ENCODE measurements at regions of chr4 and their contacts with region 1.

Region 1: DNA sequence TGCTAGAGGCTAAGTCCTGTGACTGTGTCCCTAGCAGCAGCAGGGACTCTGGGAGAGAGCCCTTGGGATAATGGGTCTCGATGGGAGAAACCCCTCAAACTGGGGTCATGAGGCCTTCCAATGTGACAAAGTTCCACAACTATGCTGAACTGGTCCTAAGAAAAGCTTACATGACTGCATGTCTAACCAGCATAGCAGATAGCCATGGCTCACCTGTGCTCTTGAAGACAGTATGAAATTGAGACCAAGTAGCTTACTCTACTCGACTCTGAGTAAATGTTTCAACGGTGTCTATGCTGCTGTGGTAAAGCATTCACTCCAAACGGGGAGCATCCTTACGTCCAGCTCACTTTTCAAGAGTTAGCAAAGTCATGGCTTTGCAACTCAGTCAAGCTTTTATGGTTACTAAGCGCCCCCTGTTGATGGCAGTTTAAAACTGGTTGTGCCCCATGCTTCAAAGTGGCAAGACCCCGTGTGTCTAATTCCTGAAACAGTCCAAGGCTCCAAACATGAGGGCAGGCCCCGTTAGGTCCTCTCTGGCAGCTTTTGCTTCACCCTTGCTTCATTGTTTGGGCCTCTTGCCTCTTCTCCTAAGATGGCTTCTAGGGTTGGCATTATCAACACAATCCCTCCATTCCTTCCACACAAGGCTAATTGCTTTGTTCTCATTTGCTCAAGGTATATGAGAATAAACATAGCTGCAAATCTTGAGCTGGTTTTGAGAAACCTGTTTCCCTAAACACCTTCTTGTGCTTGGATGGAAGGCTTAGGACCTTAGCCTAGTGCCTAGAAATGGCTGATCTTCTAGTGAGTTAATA is 46.6 kb downstream of the CCNG2 start:
- DNase-seq: peak; percentile 61 to 82 (median 65)
- ATAC-seq: peak; percentile 95
- H3K4me3 ChIP-seq: no peak overlapping the region
- H3K27ac ChIP-seq: no peak overlapping the region
- H3K4me1 ChIP-seq: no peaks in the 10 kb centered on the region
- H3K27me3 ChIP-seq: peaks cover 16 to 21% of the 10 kb centered on the region in 2 experiments; a peak in 4 of 5 replicates
- CTCF ChIP-seq: peak; percentile 76 to 89 (median 84)
- EP300 ChIP-seq: no peak
- POLR2A ChIP-seq: no peak
- RAD21 ChIP-seq: peak; percentile 83 to 89

Region 2: DNA sequence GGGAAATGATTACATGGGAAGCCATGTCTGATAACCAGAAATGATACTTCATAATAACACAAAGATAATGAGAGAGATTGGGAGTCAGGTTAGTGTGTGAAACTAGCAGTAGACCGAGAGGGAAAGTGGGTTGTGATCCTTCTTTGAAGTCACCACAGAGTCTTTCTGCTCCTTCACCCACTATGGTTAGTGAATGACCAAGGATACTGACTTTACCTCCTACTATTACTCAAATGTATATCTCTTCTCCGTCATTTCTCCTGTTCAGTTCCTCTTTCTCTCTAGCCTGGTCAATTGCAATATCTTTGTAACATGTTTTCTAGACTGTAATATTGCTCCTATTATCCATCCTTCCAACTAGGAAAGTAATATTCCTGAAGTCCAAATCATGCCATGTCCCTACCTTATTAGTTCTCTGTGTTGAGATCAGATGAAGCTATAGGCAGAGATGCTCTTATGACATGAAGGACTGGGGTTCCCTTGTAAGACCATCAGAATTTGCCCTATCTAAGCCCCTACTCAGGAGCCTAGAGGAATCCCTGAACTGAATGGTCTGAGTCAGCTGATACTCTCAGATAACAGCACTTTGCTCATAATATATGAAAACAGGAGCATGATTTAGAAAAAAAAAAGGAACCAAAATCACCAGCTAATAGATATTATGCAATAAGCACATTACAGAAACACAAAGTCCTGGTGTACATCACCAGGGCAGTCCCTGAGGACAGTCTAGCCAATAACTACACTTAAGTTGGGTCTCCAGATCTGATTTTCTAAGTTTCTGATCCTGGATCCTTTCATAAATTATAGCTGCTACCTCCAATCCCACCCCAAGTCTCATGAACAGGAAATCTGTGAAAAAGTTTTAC is 687.4 kb before region 1 on chr4:
- CTCF ChIA-PET with region 1: interaction called, 3 read pairs
- POLR2A ChIA-PET with region 1: no interaction called
- in situ Hi-C with region 1: no loop called
- intact Hi-C with region 1: loop called (anchors 5 kb)
- DNase-seq: no peak
- ATAC-seq: no peak
- H3K4me3 ChIP-seq: no peak overlapping the region
- H3K27ac ChIP-seq: no peak overlapping the region
- H3K4me1 ChIP-seq: no peaks in the 10 kb centered on the region
- H3K27me3 ChIP-seq: 0 out of 5 replicates have a peak, but pooled peaks cover 0 to 4% of the 10 kb centered on the region in 2 experiments
- CTCF ChIP-seq: no peak
- EP300 ChIP-seq: no peak
- POLR2A ChIP-seq: no peak
- RAD21 ChIP-seq: no peak

Region 3: GRCh38 chr4:76589872-76590797 is 613.5 kb before region 1 on chr4:
- CTCF ChIA-PET with region 1: no interaction called
- POLR2A ChIA-PET with region 1: no interaction called
- in situ Hi-C with region 1: no loop called
- intact Hi-C with region 1: no loop called
- DNase-seq: no peak
- ATAC-seq: no peak
- H3K4me3 ChIP-seq: no peak overlapping the region
- H3K27ac ChIP-seq: no peak overlapping the region
- H3K4me1 ChIP-seq: peaks cover 0 to 6% of the 10 kb centered on the region in 2 experiments; a peak in 2 of 5 replicates
- H3K27me3 ChIP-seq: peaks cover 14 to 33% of the 10 kb centered on the region in 2 experiments; a peak in 4 of 5 replicates
- CTCF ChIP-seq: no peak
- EP300 ChIP-seq: no peak
- POLR2A ChIP-seq: no peak
- RAD21 ChIP-seq: no peak

Region 4: GRCh38 chr4:76949276-76950051 is 254.1 kb before region 1 on chr4 and contains the start of gene SEPTIN11:
- CTCF ChIA-PET with region 1: no interaction called
- POLR2A ChIA-PET with region 1: no interaction called
- in situ Hi-C with region 1: no loop called
- intact Hi-C with region 1: loop called (anchors 5 kb)
- DNase-seq: peak; percentile 90 to 95 (median 94)
- ATAC-seq: peak; percentile 84
- H3K4me3 ChIP-seq: peak within 1 kb of the TSS; percentile 80
- H3K27ac ChIP-seq: peak within 1 kb of the TSS; percentile 82
- H3K4me1 ChIP-seq: peaks cover 36 to 46% of the 10 kb centered on the region in 2 experiments
- H3K27me3 ChIP-seq: no peaks in the 10 kb centered on the region
- CTCF ChIP-seq: no peak
- EP300 ChIP-seq: no peak
- POLR2A ChIP-seq: peak; percentile 86
- RAD21 ChIP-seq: no peak
- polyA plus RNA-seq, gene SEPTIN11: 25.7 to 26.7 TPM

Region 5: DNA sequence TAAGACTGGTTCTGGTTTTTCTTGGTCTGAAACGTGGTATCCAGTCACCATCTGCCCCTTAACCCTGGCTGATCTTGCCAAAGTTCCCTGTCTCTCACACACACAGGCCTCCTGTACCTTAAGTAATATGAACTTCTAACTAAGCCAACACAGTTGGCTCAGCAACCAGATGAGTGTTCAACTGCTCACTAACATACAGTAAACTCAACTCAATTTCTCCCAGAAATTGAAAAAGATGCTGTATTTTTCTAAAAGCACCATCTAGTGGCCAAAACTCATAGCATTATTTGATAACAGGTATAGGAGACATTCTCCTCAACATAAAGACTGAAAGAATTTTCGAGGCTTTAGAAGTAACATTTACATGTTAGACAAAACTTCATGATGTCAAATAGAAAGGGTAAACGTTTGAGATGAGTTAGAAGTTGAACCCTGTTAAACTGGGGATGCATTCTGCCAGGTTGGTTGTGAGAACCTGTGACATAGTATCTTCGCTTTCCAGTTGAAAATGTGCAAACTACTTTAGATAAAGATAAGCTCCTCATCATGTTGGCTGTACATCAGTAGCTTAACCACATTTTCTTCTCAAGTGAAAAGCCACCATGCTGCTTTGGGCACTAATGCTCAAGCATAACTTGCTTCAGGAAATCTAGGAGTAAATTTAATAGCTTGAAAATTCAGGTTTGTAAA is 159.0 kb before region 1 on chr4:
- CTCF ChIA-PET with region 1: interaction called, 17 read pairs
- POLR2A ChIA-PET with region 1: interaction called, 4 read pairs
- in situ Hi-C with region 1: no loop called
- intact Hi-C with region 1: loop called (anchors 1 kb)
- DNase-seq: peak; percentile 16 to 44 (median 20)
- ATAC-seq: peak; percentile 68
- H3K4me3 ChIP-seq: no peak overlapping the region
- H3K27ac ChIP-seq: no peak overlapping the region
- H3K4me1 ChIP-seq: peaks cover 0 to 8% of the 10 kb centered on the region in 2 experiments; a peak in 2 of 5 replicates
- H3K27me3 ChIP-seq: no peaks in the 10 kb centered on the region
- CTCF ChIP-seq: peak; percentile 32 to 67 (median 63); a peak in 4 of 6 replicates
- EP300 ChIP-seq: no peak
- POLR2A ChIP-seq: no peak
- RAD21 ChIP-seq: peak; percentile 55 to 58

Region 6: DNA sequence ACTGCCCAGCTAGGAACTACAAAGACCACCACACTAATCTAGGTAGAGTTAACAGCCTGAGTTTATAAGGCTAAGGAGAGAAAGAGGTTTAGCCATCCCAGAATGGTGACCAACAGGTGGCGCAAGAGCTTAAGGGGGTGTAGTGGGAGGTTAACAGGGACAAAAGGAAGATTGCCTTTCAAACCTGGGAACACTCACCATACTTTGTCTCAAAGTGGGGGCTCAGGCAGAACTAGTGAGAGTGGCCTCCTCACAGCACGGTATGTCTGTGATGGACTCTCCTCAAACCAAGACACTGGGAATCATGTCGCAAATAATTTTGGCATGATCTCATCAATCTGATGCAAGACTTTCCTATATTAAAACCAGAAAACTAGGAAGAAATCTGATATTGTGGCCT is 151.2 kb before region 1 on chr4:
- CTCF ChIA-PET with region 1: interaction called, 18 read pairs
- POLR2A ChIA-PET with region 1: interaction called, 4 read pairs
- in situ Hi-C with region 1: loop called (anchors 5 kb)
- intact Hi-C with region 1: loop called (anchors 1 kb)
- DNase-seq: peak; percentile 47 to 75 (median 56)
- ATAC-seq: peak; percentile 90
- H3K4me3 ChIP-seq: no peak overlapping the region
- H3K27ac ChIP-seq: no peak overlapping the region
- H3K4me1 ChIP-seq: no peaks in the 10 kb centered on the region
- H3K27me3 ChIP-seq: no peaks in the 10 kb centered on the region
- CTCF ChIP-seq: peak; percentile 66 to 80 (median 76)
- EP300 ChIP-seq: no peak
- POLR2A ChIP-seq: no peak
- RAD21 ChIP-seq: peak; percentile 68 to 70

Region 7: GRCh38 chr4:77095101-77095821 is 108.3 kb before region 1 on chr4:
- CTCF ChIA-PET with region 1: no interaction called
- POLR2A ChIA-PET with region 1: interaction called, 3 read pairs
- in situ Hi-C with region 1: no loop called
- intact Hi-C with region 1: loop called (anchors 1 kb)
- DNase-seq: peak; percentile 57 to 69 (median 62)
- ATAC-seq: peak; percentile 99
- H3K4me3 ChIP-seq: no peak overlapping the region
- H3K27ac ChIP-seq: no peak overlapping the region
- H3K4me1 ChIP-seq: no peaks in the 10 kb centered on the region; a peak in 1 of 5 replicates
- H3K27me3 ChIP-seq: peaks cover 0 to 4% of the 10 kb centered on the region in 2 experiments; a peak in 2 of 5 replicates
- CTCF ChIP-seq: peak; percentile 68 to 87 (median 78)
- EP300 ChIP-seq: no peak
- POLR2A ChIP-seq: no peak
- RAD21 ChIP-seq: peak; percentile 64 to 66

Region 8: DNA sequence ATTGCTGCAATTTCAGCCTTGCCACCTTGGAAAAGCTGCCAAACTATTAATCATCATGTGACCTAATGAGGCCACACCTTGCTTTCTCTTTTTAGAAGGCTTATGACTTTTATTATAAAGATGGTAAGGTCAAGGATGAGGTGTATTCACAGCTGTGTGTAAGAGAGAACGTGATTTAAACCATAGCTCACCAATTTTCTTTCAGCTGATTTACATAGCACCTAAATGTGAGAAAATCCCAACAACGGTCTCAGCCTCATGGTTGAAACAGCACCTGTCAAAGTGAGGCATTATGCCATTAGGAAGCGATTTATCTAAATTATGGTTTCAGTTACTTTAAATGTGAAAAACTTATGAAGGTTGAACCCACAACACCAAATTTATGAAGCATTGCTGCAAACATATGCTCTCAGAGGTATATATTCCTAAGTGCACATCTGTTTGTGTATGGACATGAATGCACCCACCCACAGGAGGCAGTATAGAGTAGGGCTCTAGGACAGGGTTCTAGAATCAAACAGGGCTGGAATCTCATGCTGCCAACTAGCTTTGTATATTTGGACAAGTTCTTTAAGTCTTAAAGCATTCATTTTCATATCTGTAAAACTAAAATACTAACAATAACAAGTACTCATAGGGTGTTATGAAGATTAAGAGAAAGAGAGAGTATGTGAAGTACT is 1388.7 kb after region 1 on chr4:
- CTCF ChIA-PET with region 1: no interaction called
- POLR2A ChIA-PET with region 1: no interaction called
- in situ Hi-C with region 1: no loop called
- intact Hi-C with region 1: no loop called
- DNase-seq: peak; percentile 55 to 75 (median 64)
- ATAC-seq: peak; percentile 86
- H3K4me3 ChIP-seq: no peak overlapping the region
- H3K27ac ChIP-seq: no peak overlapping the region
- H3K4me1 ChIP-seq: peaks cover 0 to 3% of the 10 kb centered on the region in 2 experiments; a peak in 1 of 5 replicates
- H3K27me3 ChIP-seq: no peaks in the 10 kb centered on the region
- CTCF ChIP-seq: peak; percentile 65 to 71 (median 70)
- EP300 ChIP-seq: no peak; the same call in 1 of the 2 replicates
- POLR2A ChIP-seq: no peak
- RAD21 ChIP-seq: peak in 1 of 2 experiments; percentile 56; a peak in 2 of 4 replicates

Measured in K562 (cell line).